Astrocyte of the cerebellum (primary cell): ENCODE measurements at regions of chr9 and their contacts with region 1.

Region 1: GRCh38 chr9:129776938-129777768 is 24.3 kb upstream of the PTGES start:
- DNase-seq: peak; percentile 99
- H3K4me3 ChIP-seq: peak overlapping the region; percentile 5
- CTCF ChIP-seq: no peak

Region 2: GRCh38 chr9:129696938-129697650 is 80.1 kb before region 1 on chr9:
- in situ Hi-C with region 1: loop called (anchors 5 kb)
- DNase-seq: no peak
- H3K4me3 ChIP-seq: peak overlapping the region; percentile 31
- CTCF ChIP-seq: no peak